Dorsolateral prefrontal cortex (tissue), 120 donors: ENCODE measurements at regions of chr9 and their contacts with region 1.

Region 1: GRCh38 chr9:87336914-87337333 is 160.7 kb upstream of the DAPK1 start:
- DNase-seq: no peak
- H3K4me3 ChIP-seq: peak overlapping the region; percentile 18 to 68 (median 49)
- H3K27ac ChIP-seq: peak overlapping the region in 15 of 59 donors; percentile 10 to 77 (median 29)
- H3K27me3 ChIP-seq: peaks cover 0 to 3% (median 0%) of the 10 kb centered on the region in 45 donors
- CTCF ChIP-seq: peak; percentile 55 to 87 (median 76)

Region 2: GRCh38 chr9:86413966-86414880 is 922.7 kb before region 1 on chr9:
- intact Hi-C with region 1: loop called in 1 of 2 experiments (anchors 10 kb)
- DNase-seq: no peak
- H3K4me3 ChIP-seq: no peak overlapping the region
- H3K27ac ChIP-seq: no peak overlapping the region
- H3K27me3 ChIP-seq: no peaks in the 10 kb centered on the region
- CTCF ChIP-seq: peak; percentile 58 to 95 (median 82)

Region 3: GRCh38 chr9:87662808-87663528 is 326.0 kb after region 1 on chr9:
- intact Hi-C with region 1: loop called (anchors 2 to 5 kb)
- DNase-seq: peak in 9 of 10 donors; percentile 44 to 81 (median 58)
- H3K4me3 ChIP-seq: no peak overlapping the region
- H3K27ac ChIP-seq: peak overlapping the region in 2 of 59 donors; percentile 12 to 38
- H3K27me3 ChIP-seq: no peaks in the 10 kb centered on the region
- CTCF ChIP-seq: peak; percentile 21 to 79 (median 69)

Region 4: GRCh38 chr9:88041447-88041846 is 704.5 kb after region 1 on chr9:
- intact Hi-C with region 1: loop called in 1 of 2 experiments (anchors 5 kb)
- DNase-seq: no peak
- H3K4me3 ChIP-seq: no peak overlapping the region
- H3K27ac ChIP-seq: no peak overlapping the region
- H3K27me3 ChIP-seq: no peaks in the 10 kb centered on the region
- CTCF ChIP-seq: peak in 54 of 56 donors; percentile 11 to 70 (median 48)